B cell (primary cell): ENCODE measurements at regions of chrX and their contacts with region 1.

Region 1: DNA sequence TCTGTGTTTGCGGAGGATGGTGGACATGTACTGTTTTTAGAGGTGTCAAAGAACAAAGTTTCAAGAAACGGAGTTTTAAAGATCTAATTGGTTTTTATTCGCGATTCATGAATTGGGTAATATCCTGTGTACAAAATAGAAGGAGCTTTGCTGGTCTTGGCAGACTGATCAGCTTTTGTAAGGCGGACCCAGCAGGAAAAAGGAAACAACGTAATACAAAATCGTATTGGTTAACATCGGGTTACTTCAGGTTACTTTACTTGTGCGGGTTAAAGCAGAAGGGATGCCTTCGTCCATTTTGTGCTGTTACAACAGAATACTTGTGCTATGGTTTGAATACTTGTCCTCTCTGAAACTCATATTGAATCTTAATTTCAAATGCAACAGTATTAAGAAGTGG is 11.4 kb upstream of the NYX start:
- DNase-seq: no peak
- ATAC-seq: no peak
- H3K4me3 ChIP-seq: no peak overlapping the region
- H3K4me3 Mint-ChIP-seq: no peak overlapping the region
- H3K27ac ChIP-seq: no peak overlapping the region
- H3K27ac Mint-ChIP-seq: no peak overlapping the region
- H3K4me1 ChIP-seq: no peaks in the 10 kb centered on the region
- H3K4me1 Mint-ChIP-seq: no peaks in the 10 kb centered on the region
- H3K27me3 ChIP-seq: no peaks in the 10 kb centered on the region
- H3K27me3 Mint-ChIP-seq: no peaks in the 10 kb centered on the region
- CTCF ChIP-seq: no peak

Region 2: DNA sequence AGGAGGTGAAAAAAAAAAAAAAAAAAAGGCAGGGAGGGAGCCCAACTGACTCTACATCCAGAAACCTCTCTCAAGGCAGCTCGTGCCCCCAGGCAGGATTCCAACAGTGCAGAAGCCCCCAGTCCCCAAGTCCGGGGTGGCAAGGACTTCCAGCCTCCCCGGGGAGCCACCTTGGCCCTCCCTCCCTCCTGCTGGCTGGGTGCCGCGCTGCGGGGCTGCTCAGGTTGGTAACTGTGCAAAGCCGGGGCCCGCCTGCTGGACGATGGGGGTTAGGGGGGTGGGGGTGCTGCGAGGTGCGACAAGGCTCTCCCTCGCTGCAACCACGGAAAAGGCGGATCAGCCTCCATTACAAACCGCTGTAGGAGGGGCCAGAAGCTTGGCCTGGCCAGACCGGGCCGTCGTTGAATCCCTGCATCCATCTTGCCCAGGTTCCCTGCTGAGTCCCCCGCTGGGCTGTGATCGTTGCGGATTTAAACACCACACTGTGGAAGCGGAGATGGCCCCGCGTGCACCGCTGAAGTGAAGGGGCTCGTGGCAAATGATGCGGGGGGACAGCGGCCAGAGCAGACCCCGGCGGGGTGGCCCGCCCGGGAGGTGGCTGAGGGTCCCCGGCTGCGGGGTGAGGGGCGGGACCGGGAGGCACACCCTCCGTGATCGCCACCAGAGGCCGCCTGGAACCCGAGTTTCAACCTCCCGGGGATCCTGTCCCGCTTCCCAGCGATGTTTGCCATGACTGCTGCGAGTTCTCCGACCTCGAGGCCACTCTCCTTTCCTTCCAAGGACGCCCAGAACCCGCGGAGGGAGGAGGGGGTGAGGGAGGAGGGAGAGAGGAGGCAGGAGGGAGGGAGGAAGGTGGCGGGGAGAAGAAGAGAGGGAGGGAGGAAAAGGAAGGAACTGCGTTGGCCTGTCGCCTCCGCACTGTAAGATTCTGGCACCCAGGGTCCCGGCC is 159.8 kb before region 1 on chrX:
- CTCF ChIA-PET with region 1: no interaction called
- POLR2A ChIA-PET with region 1: no interaction called
- intact Hi-C with region 1: loop called (anchors 5 kb)
- DNase-seq: peak; percentile 47
- ATAC-seq: peak; percentile 64
- H3K4me3 ChIP-seq: peak overlapping the region; percentile 42 to 65 (median 44)
- H3K4me3 Mint-ChIP-seq: peak overlapping the region; percentile 85
- H3K27ac ChIP-seq: peak overlapping the region in 1 of 2 donors; percentile 52
- H3K27ac Mint-ChIP-seq: peak overlapping the region; percentile 68
- H3K4me1 ChIP-seq: peaks cover 12 to 17% of the 10 kb centered on the region in 2 donors
- H3K4me1 Mint-ChIP-seq: peaks cover 11% of the 10 kb centered on the region
- H3K27me3 ChIP-seq: no peaks in the 10 kb centered on the region
- H3K27me3 Mint-ChIP-seq: no peaks in the 10 kb centered on the region
- CTCF ChIP-seq: no peak

Region 3: GRCh38 chrX:41561045-41561444 is 125.3 kb after region 1 on chrX:
- CTCF ChIA-PET with region 1: no interaction called
- POLR2A ChIA-PET with region 1: no interaction called
- intact Hi-C with region 1: no loop called
- DNase-seq: no peak
- ATAC-seq: peak; percentile 49
- H3K4me3 ChIP-seq: no peak overlapping the region
- H3K4me3 Mint-ChIP-seq: no peak overlapping the region
- H3K27ac ChIP-seq: no peak overlapping the region
- H3K27ac Mint-ChIP-seq: no peak overlapping the region
- H3K4me1 ChIP-seq: peaks cover 7 to 13% of the 10 kb centered on the region in 2 donors
- H3K4me1 Mint-ChIP-seq: peaks cover 20% of the 10 kb centered on the region
- H3K27me3 ChIP-seq: no peaks in the 10 kb centered on the region
- H3K27me3 Mint-ChIP-seq: no peaks in the 10 kb centered on the region
- CTCF ChIP-seq: no peak

Region 4: DNA sequence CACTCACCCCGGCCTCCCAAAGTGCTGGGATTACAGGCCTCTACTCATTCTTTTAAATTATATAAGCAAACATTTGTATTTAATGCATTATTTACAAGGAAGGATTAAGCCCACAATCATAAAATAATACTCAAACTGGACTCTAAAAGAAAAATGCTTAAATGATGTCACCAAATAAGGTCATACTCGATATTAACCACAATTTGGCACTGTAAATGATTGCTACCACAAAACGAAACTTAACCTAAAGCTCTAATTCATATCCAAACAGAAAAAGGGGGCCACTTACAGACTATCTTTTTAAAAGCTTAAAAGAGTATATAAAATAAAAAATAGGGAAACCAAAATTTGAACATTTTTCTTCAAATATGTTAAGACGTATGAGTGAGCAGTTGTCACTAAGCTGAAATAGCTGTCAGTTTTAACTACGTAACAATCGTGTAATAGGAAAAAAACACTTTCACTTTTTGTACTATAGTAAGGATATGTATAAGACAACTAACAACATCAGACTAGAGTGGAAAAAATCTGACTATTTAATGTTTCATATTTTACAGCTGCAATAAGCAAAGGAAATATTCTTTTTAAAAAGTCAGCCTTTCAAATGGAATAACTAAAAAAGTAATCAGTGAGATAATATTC is 144.8 kb after region 1 on chrX:
- CTCF ChIA-PET with region 1: no interaction called
- POLR2A ChIA-PET with region 1: no interaction called
- intact Hi-C with region 1: no loop called
- DNase-seq: peak; percentile 15
- ATAC-seq: no peak
- H3K4me3 ChIP-seq: peak overlapping the region in 2 of 5 experiments; percentile 5 to 41
- H3K4me3 Mint-ChIP-seq: peak overlapping the region; percentile 55
- H3K27ac ChIP-seq: peak overlapping the region in 1 of 2 donors; percentile 39
- H3K27ac Mint-ChIP-seq: no peak overlapping the region
- H3K4me1 ChIP-seq: peaks cover 0 to 2% of the 10 kb centered on the region in 2 donors
- H3K4me1 Mint-ChIP-seq: peaks cover 6% of the 10 kb centered on the region
- H3K27me3 ChIP-seq: no peaks in the 10 kb centered on the region
- H3K27me3 Mint-ChIP-seq: no peaks in the 10 kb centered on the region
- CTCF ChIP-seq: no peak